ENCODE measurements at regions of chr7 and their contacts with region 1.

Region 1: GRCh38 chr7:55086413-55087201 is 67.8 kb downstream of the EGFR start:
- DNase-seq: peak; percentile 52
- ATAC-seq: peak; percentile 92
- H3K4me3 ChIP-seq: no peak overlapping the region
- H3K4me3 Mint-ChIP-seq: peak overlapping the region; percentile 75
- H3K27ac ChIP-seq: no peak overlapping the region
- H3K27ac Mint-ChIP-seq: peak overlapping the region; percentile 70
- H3K4me1 ChIP-seq: peaks cover 9 to 14% of the 10 kb centered on the region in 2 donors
- H3K4me1 Mint-ChIP-seq: peaks cover 21% of the 10 kb centered on the region
- H3K27me3 ChIP-seq: peaks cover 0 to 13% (median 9%) of the 10 kb centered on the region in 4 experiments
- H3K27me3 Mint-ChIP-seq: peaks cover 59% of the 10 kb centered on the region
- CTCF ChIP-seq: no peak

Region 2: DNA sequence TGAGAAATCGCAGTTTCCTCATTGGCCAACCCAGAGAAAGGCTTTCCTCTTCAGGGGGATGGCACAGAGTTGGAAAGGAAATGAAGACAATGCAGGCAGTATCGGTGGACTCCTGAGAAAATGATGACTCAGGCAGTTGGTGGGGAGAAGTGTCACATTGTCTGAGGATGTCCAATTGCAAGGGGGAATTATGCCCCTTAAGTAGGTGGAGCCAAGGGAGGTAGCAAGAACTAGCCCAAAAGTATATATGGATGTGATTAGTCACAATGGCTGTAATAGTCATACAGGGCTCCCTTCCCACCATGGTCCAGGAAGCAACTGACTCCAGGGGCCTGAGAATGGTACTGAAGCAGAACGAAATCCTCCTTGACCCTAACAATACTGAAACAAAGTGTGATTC is 126.1 kb before region 1 on chr7:
- CTCF ChIA-PET with region 1: no interaction called
- POLR2A ChIA-PET with region 1: no interaction called
- intact Hi-C with region 1: no loop called
- DNase-seq: no peak
- ATAC-seq: no peak
- H3K4me3 ChIP-seq: no peak overlapping the region
- H3K4me3 Mint-ChIP-seq: no peak overlapping the region
- H3K27ac ChIP-seq: no peak overlapping the region
- H3K27ac Mint-ChIP-seq: no peak overlapping the region
- H3K4me1 ChIP-seq: no peaks in the 10 kb centered on the region
- H3K4me1 Mint-ChIP-seq: no peaks in the 10 kb centered on the region
- H3K27me3 ChIP-seq: no peaks in the 10 kb centered on the region
- H3K27me3 Mint-ChIP-seq: peaks cover 12% of the 10 kb centered on the region
- CTCF ChIP-seq: no peak

Region 3: GRCh38 chr7:55026866-55027490 is 59.6 kb before region 1 on chr7:
- CTCF ChIA-PET with region 1: no interaction called
- POLR2A ChIA-PET with region 1: no interaction called
- intact Hi-C with region 1: no loop called
- DNase-seq: no peak
- ATAC-seq: no peak
- H3K4me3 ChIP-seq: no peak overlapping the region
- H3K4me3 Mint-ChIP-seq: no peak overlapping the region
- H3K27ac ChIP-seq: no peak overlapping the region
- H3K27ac Mint-ChIP-seq: no peak overlapping the region
- H3K4me1 ChIP-seq: no peaks in the 10 kb centered on the region
- H3K4me1 Mint-ChIP-seq: no peaks in the 10 kb centered on the region
- H3K27me3 ChIP-seq: peaks cover 0 to 3% (median under 1%) of the 10 kb centered on the region in 4 experiments
- H3K27me3 Mint-ChIP-seq: peaks cover 22% of the 10 kb centered on the region
- CTCF ChIP-seq: no peak

Region 4: DNA sequence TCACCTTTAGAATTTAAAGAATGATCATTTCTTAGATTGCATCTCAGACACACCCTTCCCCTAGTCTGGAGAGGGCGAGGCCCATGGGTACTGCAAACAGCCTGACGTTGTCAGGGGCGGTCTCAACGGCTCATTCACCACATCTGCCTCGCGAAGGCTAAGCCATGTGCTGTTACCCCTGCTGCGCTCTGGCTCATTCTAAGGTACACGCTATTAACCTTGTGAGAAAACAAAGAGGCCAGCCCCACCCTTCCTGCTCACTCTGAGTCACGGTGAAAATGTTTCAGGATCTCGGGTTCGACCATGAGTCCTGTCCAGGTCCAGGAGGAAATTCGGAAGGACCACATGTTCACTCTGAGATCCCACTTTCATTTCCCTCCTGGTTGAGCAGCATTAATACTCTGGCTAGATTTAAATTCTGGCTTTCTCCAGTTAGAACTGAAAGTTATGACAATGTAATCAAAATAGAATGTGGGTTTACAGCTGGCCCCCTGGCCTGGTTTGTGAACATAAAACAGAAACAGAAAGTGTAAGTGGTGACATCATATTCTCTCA is 12.6 kb before region 1 on chr7:
- CTCF ChIA-PET with region 1: no interaction called
- POLR2A ChIA-PET with region 1: interaction called, 12 read pairs
- intact Hi-C with region 1: loop called (anchors 1 kb)
- DNase-seq: peak; percentile 61
- ATAC-seq: peak; percentile 91
- H3K4me3 ChIP-seq: peak overlapping the region in 3 of 5 experiments; percentile 13 to 42 (median 40)
- H3K4me3 Mint-ChIP-seq: peak overlapping the region; percentile 84
- H3K27ac ChIP-seq: peak overlapping the region; percentile 71 to 74
- H3K27ac Mint-ChIP-seq: peak overlapping the region; percentile 95
- H3K4me1 ChIP-seq: peaks cover 12 to 15% of the 10 kb centered on the region in 2 donors
- H3K4me1 Mint-ChIP-seq: peaks cover 22% of the 10 kb centered on the region
- H3K27me3 ChIP-seq: peaks cover 0 to 14% (median 3%) of the 10 kb centered on the region in 4 experiments
- H3K27me3 Mint-ChIP-seq: no peaks in the 10 kb centered on the region
- CTCF ChIP-seq: no peak